ENCODE measurements at regions of chr17 and their contacts with region 1.

Region 1: GRCh38 chr17:8965394-8966168 is at the start of gene PIK3R5:
- DNase-seq: peak; percentile 93
- CTCF ChIP-seq: no peak

Region 2: DNA sequence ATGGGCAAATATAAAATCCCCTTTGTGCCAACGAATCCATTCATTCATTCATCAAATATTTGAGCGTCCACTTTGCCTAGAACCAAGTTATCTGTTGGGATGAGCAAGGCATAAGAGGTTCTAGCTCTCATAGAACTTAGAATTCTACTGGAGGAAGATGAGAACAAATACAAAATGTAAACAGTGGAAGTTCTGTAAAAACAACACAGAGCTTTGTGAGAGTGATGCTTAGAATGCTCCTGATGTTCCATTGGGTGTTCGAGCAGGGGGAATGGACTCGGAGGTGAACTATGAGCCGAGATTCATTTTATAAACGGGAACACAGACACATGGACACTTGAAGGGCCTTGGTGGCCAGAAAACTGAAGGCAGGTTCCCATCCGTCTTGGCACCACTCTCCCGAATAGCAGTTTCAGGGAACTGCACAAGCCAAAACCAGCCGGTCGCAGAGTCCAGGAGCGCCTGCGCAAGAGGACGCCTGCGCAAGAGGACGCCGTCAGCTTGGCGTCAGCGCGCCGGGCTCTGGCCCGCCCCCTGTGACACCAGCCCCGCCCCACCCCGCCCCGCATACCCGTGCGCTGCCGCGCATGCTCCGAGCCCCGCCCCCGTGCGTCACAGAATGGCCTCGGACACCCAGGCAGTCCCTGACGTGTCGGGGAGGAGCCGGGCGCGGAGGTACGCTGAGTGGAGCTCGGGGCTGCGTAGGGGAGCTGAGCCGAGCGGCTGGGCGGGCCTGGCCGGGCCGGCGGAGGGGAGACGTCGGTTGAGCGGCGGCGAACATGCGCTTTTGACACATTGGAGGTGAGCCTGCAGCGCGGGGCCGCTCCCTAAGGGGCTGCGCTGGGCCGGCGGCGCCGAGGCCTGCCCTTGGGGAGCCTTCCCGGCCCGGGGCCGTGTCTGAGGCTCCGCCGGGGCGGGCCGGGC is 530.1 kb before region 1 on chr17 and contains the start of gene NDEL1:
- CTCF ChIA-PET with region 1: no interaction called
- POLR2A ChIA-PET with region 1: no interaction called
- DNase-seq: peak; percentile 99
- CTCF ChIP-seq: no peak

Region 3: DNA sequence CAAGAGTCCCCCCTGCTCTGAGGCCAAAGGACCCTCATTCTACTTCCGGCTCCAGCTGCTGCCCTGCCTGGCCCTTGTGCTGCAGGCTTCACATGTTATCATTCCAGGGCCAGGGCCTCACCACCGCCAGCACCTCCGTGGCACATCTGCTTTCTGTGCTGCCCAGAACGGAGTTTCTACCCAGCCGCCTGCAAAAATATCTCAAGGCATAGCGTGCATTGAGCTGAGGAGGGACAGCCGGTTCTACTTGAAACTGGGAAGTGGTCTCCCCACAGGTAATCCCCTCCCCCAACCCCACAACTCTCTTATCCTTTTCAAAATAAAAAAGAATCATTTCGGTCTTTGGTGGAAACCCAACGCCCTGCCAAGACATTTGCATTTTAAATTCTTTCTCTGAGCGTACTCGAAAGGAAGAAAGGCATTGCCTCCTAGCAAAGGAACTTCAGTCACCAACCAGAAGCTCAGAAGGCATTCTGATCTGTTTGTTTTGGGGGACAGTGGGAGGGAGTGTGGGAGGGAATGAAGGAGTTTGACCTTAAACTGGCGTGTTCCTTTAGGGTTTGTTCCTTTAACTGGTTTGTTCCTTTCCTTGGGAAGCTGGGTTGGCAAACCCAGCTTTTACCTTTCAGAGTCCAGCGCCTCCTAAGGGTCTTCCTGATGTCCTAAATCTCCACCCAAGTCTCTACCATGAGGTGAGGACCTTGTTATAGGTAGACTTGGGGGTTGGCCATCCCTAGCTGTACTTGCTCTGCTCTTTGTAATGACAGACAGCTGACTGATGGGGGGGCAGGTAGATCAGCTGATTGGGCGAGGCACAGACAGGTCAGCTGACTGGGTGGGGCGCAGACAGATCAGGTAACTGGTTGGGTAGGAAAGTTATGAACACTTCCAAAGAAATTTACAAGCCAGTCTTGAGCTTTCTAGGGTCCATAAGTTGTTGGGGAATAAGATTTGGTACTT is 64.7 kb before region 1 on chr17:
- CTCF ChIA-PET with region 1: interaction called, 15 read pairs
- POLR2A ChIA-PET with region 1: interaction called, 3 read pairs
- DNase-seq: peak; percentile 48
- CTCF ChIP-seq: peak; percentile 7

Region 4: DNA sequence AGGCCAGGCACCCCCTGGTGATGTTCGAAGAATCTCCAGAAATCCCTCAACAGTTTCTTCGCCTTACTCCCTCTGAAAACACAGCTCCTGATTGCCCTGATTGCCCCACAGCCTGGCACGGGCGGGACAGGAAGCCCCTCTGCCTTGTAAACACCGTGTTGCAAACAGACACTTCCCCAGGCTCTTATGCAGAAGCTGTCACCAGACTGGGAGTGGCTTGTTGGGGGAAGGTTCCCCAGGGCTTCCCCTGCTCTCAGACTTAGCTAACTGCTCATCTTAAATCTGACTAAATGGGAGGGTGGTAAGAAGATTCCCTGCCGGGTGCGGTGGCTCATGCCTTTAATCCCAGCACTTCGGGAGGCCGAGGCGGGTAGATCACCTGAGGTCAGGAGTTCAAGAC is 11.2 kb before region 1 on chr17:
- CTCF ChIA-PET with region 1: interaction called, 63 read pairs
- POLR2A ChIA-PET with region 1: interaction called, 4 read pairs
- DNase-seq: peak; percentile 68
- CTCF ChIP-seq: no peak

Region 5: DNA sequence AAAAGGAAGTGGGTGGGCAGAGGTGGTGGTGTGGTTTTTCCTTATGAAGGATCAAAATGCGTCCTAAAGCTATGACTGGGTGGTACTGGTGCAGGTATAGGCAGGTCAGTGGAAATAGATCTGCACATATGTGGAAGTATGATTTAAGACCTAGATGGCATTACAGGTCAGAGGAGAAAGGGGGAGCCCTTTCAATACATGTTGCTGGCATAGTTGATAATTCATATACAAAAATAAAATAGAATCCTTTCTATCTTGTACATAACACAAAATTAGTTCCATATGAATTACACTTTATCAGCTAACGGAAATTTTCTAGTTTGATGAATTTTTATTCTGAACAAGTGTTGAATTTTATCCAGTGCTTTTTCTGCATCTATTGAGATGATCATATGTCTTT is 20.7 kb after region 1 on chr17:
- CTCF ChIA-PET with region 1: no interaction called
- POLR2A ChIA-PET with region 1: no interaction called
- DNase-seq: no peak
- CTCF ChIP-seq: no peak